CD8-positive, alpha-beta T cell (primary cell): ENCODE measurements at regions of chr2 and their contacts with region 1.

Region 1: DNA sequence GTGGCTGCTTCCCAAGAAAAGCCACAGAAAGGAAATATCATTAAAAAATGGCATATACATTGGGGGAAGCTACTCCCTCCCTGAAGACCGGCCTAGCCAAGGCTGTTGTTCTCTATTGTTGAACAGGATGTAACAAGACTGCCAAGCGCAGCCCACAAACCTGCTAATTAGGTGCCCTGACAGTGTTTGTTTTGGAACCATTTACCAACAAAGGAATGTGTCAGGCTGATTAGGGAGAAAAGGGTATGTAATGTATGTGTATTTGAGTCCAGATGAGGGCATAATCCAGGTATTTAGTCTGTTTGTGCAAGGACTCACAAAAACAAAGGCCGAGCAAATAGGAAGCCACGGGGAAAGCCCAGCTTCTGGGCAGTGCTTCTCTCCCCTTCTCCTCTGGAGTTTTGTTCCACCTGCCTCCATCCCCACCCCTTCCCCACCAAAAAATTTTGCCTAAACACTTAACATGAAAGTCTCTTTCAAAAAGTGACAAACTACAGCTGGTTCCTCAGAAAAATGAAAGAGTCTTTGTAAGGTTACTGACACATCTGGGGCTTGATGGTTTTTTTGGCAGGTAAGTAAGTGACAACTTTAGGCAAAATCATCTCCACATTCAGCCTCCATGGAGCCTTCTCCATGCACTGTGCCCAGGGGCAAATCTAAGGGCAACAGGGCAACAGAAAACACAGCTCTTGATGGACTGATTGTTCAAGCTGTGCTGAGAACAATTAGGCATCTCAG is 78.3 kb upstream of the FZD5 start:
- DNase-seq: peak in 1 of 9 experiments; percentile 12
- ATAC-seq: no peak
- H3K4me3 ChIP-seq: no peak overlapping the region
- H3K4me3 Mint-ChIP-seq: no peak overlapping the region
- H3K27ac ChIP-seq: no peak overlapping the region
- H3K27ac Mint-ChIP-seq: no peak overlapping the region
- H3K4me1 ChIP-seq: no peaks in the 10 kb centered on the region
- H3K4me1 Mint-ChIP-seq: no peaks in the 10 kb centered on the region
- H3K27me3 ChIP-seq: no peaks in the 10 kb centered on the region
- H3K27me3 Mint-ChIP-seq: no peaks in the 10 kb centered on the region
- CTCF ChIP-seq: no peak

Region 2: GRCh38 chr2:207571370-207571769 is 276.6 kb before region 1 on chr2:
- CTCF ChIA-PET with region 1: no interaction called
- POLR2A ChIA-PET with region 1: no interaction called
- intact Hi-C with region 1: no loop called
- DNase-seq: no peak
- ATAC-seq: no peak
- H3K4me3 ChIP-seq: no peak overlapping the region
- H3K4me3 Mint-ChIP-seq: no peak overlapping the region
- H3K27ac ChIP-seq: no peak overlapping the region
- H3K27ac Mint-ChIP-seq: no peak overlapping the region
- H3K4me1 ChIP-seq: no peaks in the 10 kb centered on the region
- H3K4me1 Mint-ChIP-seq: peaks cover 24% of the 10 kb centered on the region
- H3K27me3 ChIP-seq: no peaks in the 10 kb centered on the region
- H3K27me3 Mint-ChIP-seq: no peaks in the 10 kb centered on the region
- CTCF ChIP-seq: no peak

Region 3: DNA sequence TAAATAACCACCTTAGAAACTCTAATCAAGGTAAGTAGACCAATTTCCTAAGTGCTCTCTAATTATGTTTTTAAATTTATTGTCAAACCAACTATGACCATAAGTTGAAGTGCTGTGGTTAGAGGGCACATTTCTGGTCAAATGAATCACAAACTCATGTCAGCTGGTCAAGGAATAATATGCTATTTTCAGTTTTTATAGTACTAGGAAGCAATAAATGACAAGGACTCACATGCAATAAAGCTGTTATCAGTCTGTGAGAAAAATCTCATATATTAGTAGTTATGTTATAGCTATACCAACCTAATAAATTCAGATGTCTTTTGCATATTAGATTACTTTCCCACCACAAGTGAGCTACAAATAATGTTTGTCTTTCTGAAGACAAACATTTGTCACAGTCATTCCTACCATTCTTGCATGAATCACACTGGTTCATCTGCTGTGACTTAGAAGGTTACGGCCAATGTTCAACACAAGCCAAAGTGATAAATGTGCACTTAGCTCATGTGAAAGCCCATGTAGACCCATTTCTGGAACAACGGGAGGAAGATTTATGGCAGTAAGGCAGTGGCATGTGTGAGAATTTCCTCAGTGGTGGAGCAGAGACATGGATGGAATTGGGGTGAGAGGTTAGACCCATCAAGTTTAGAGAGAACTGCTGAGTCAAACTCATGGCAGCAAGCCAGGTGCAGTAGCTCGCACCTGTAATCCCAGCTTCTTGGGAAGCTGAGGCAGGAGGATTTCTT is 163.9 kb before region 1 on chr2:
- CTCF ChIA-PET with region 1: no interaction called
- POLR2A ChIA-PET with region 1: no interaction called
- intact Hi-C with region 1: no loop called
- DNase-seq: no peak
- ATAC-seq: no peak
- H3K4me3 ChIP-seq: no peak overlapping the region
- H3K4me3 Mint-ChIP-seq: no peak overlapping the region
- H3K27ac ChIP-seq: no peak overlapping the region
- H3K27ac Mint-ChIP-seq: no peak overlapping the region
- H3K4me1 ChIP-seq: no peaks in the 10 kb centered on the region
- H3K4me1 Mint-ChIP-seq: no peaks in the 10 kb centered on the region
- H3K27me3 ChIP-seq: no peaks in the 10 kb centered on the region
- H3K27me3 Mint-ChIP-seq: peaks cover 21% of the 10 kb centered on the region
- CTCF ChIP-seq: no peak

Region 4: GRCh38 chr2:207885010-207885409 is 37.0 kb after region 1 on chr2:
- CTCF ChIA-PET with region 1: no interaction called
- POLR2A ChIA-PET with region 1: no interaction called
- intact Hi-C with region 1: loop called in 1 of 2 experiments (anchors 1 kb)
- DNase-seq: no peak
- ATAC-seq: no peak
- H3K4me3 ChIP-seq: no peak overlapping the region
- H3K4me3 Mint-ChIP-seq: no peak overlapping the region
- H3K27ac ChIP-seq: no peak overlapping the region
- H3K27ac Mint-ChIP-seq: no peak overlapping the region
- H3K4me1 ChIP-seq: no peaks in the 10 kb centered on the region
- H3K4me1 Mint-ChIP-seq: no peaks in the 10 kb centered on the region
- H3K27me3 ChIP-seq: no peaks in the 10 kb centered on the region
- H3K27me3 Mint-ChIP-seq: no peaks in the 10 kb centered on the region
- CTCF ChIP-seq: no peak